Body of pancreas (tissue), 4 donors: ENCODE measurements at regions of chr7 and their contacts with region 1.

Region 1: GRCh38 chr7:107147464-107148393 is 21.1 kb upstream of the HBP1 start:
- DNase-seq: peak in 3 of 4 donors; percentile 13 to 36 (median 14)
- ATAC-seq: peak; percentile 53
- H3K4me3 ChIP-seq: no peak overlapping the region
- H3K27ac ChIP-seq: no peak overlapping the region
- H3K4me1 ChIP-seq: peaks cover 4% of the 10 kb centered on the region
- H3K27me3 ChIP-seq: no peaks in the 10 kb centered on the region
- CTCF ChIP-seq: peak; percentile 14 to 58 (median 54)
- POLR2A ChIP-seq: no peak

Region 2: DNA sequence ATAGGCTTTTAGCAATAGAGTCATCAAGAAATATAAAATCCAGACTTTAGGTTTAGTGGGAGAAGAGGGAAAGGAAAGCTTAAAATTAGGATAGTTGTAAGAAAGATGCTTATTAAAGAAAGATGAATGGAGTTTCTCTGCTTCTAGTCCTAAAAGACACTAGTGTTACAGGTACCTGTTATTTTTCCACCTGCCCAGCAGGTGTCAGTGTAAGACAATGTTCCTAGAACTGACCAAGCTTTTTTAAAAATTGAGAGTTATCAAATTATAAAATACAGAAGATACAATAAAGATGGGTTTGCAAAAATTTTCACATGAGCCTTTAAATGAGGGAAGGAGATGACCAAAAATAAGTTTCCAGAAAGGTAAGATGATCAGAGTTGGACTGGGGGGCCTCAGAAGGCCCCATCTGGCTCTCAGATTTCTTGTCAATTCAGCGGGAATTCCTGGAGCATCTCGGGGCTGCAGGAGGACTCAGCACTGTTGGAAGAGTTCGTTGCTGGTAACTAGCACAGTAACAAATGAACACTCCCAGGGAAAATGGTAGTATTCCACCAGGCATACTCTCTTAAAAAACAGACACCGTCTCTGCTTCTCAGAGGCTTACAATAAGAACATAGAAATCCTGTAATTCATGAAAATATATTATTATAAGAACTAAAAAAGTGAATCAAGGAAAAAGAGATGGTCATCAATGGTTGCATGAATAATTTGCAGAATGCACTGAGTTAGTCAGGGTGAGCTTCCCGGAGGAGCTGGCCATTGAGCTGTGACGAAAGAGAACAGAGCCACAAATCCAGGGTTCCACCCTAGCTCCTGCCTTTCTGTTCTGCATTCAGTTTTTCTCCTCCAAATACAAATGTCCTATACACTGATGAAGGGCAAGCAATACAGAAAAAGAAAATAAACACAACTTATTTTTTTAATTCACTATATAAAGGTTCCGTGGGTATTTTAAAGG is 354.4 kb before region 1 on chr7:
- intact Hi-C with region 1: loop called (anchors 5 kb)
- DNase-seq: peak in 2 of 4 donors; percentile 18 to 31
- ATAC-seq: no peak
- H3K4me3 ChIP-seq: no peak overlapping the region
- H3K27ac ChIP-seq: no peak overlapping the region
- H3K4me1 ChIP-seq: no peaks in the 10 kb centered on the region
- H3K27me3 ChIP-seq: no peaks in the 10 kb centered on the region
- CTCF ChIP-seq: peak; percentile 28 to 72 (median 66)
- POLR2A ChIP-seq: no peak

Region 3: GRCh38 chr7:107269790-107270189 is 122.1 kb after region 1 on chr7:
- intact Hi-C with region 1: no loop called
- DNase-seq: no peak
- ATAC-seq: no peak
- H3K4me3 ChIP-seq: no peak overlapping the region
- H3K27ac ChIP-seq: no peak overlapping the region
- H3K4me1 ChIP-seq: no peaks in the 10 kb centered on the region
- H3K27me3 ChIP-seq: no peaks in the 10 kb centered on the region
- CTCF ChIP-seq: no peak
- POLR2A ChIP-seq: no peak

Region 4: DNA sequence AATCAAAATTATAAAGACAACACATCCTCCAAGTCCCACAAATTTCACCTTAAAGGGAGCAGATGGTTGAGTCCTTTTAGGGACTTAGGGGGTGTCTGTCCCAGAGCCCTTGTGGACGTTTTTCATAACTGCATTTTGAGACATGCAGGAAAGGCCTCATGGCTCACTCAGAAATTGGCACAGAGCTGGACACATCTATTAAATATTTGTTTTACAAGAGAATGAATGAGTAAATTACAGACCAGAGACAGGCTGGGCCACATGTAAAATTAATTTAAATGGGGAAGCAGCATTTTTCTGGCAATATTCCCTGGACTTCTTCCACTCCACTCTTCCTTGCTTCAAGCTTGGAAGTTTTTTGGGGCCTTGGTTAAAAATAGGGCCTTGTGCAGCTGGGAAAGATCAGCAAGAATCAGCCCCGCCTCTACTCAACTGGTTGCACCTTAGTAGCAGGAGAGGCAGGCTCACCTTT is 835.2 kb after region 1 on chr7:
- intact Hi-C with region 1: no loop called
- DNase-seq: no peak
- ATAC-seq: no peak
- H3K4me3 ChIP-seq: no peak overlapping the region
- H3K27ac ChIP-seq: no peak overlapping the region
- H3K4me1 ChIP-seq: no peaks in the 10 kb centered on the region
- H3K27me3 ChIP-seq: no peaks in the 10 kb centered on the region
- CTCF ChIP-seq: no peak
- POLR2A ChIP-seq: no peak